Esophagus squamous epithelium (tissue), 5 donors: ENCODE measurements at regions of chr10 and their contacts with region 1.

Region 1: GRCh38 chr10:30783939-30784500 is 154.5 kb upstream of the LYZL2 start:
- DNase-seq: no peak
- H3K4me3 ChIP-seq: peak overlapping the region; percentile 40 to 88 (median 60)
- H3K27ac ChIP-seq: peak overlapping the region; percentile 84 to 95 (median 88)
- H3K4me1 ChIP-seq: peaks cover 10 to 38% (median 13%) of the 10 kb centered on the region in 3 donors
- H3K27me3 ChIP-seq: peaks cover 0 to 11% (median 0%) of the 10 kb centered on the region in 4 donors
- CTCF ChIP-seq: peak; percentile 69 to 83 (median 78)
- POLR2A ChIP-seq: peak in 1 of 4 donors; percentile 7

Region 2: GRCh38 chr10:30893208-30893607 is 109.2 kb after region 1 on chr10:
- intact Hi-C with region 1: no loop called
- DNase-seq: no peak
- H3K4me3 ChIP-seq: no peak overlapping the region
- H3K27ac ChIP-seq: no peak overlapping the region
- H3K4me1 ChIP-seq: no peaks in the 10 kb centered on the region
- H3K27me3 ChIP-seq: no peaks in the 10 kb centered on the region
- CTCF ChIP-seq: no peak
- POLR2A ChIP-seq: no peak

Region 3: DNA sequence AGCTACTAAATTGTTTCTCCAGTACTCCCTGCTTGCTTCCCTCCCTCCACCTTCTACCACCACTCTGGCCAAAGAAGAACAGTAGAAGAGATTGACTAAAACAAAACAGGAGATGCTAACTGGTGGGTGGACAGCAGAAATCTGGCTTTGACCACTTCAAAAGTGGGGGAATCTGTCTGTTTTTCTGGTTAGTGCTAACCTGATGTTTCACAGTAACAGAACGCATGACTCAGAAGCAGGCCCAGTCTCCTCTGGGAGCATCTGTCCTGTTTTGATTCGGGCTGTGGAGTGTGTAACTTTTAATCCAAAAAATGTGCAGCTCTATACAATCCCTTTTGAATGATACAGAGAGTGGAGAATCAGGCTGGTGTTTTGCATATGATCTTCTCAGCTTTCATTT is 280.3 kb after region 1 on chr10:
- intact Hi-C with region 1: no loop called
- DNase-seq: no peak
- H3K4me3 ChIP-seq: no peak overlapping the region
- H3K27ac ChIP-seq: peak overlapping the region in 3 of 4 donors; percentile 2 to 64 (median 41)
- H3K4me1 ChIP-seq: peaks cover 0 to 12% (median 6%) of the 10 kb centered on the region in 3 donors
- H3K27me3 ChIP-seq: no peaks in the 10 kb centered on the region
- CTCF ChIP-seq: no peak
- POLR2A ChIP-seq: no peak

Region 4: DNA sequence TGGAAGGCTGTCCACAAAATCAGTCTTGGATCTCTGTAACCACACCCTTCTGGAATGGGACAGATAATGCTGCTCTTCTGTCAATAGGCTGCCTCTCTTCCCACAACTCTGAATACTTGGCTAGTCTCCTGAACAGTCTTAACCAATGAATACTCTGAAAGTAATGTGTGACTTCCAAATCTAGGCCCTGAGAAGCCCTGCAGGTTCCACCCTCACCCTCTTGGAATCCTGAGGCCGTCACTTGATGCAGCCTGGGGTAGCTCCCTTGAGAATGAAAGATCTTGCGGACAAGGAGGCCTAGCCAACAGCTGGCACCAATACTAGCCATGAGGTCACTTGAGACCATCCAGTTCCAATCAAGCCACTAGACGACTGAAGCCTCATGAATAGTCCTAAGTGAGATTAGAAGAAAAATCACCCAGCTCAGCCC is 1035.4 kb after region 1 on chr10:
- intact Hi-C with region 1: loop called (anchors 10 kb)
- DNase-seq: no peak
- H3K4me3 ChIP-seq: no peak overlapping the region
- H3K27ac ChIP-seq: no peak overlapping the region
- H3K4me1 ChIP-seq: no peaks in the 10 kb centered on the region
- H3K27me3 ChIP-seq: no peaks in the 10 kb centered on the region
- CTCF ChIP-seq: no peak
- POLR2A ChIP-seq: no peak